ENCODE measurements at regions of chr17 and their contacts with region 1.

Region 1: GRCh38 chr17:80876950-80877728 is 114.5 kb upstream of the CHMP6 start:
- DNase-seq: peak in 2 of 3 donors; percentile 35 to 38
- ATAC-seq: no peak
- H3K4me3 ChIP-seq: no peak overlapping the region
- H3K27ac ChIP-seq: no peak overlapping the region
- H3K4me1 ChIP-seq: peaks cover 13% of the 10 kb centered on the region
- H3K27me3 ChIP-seq: no peaks in the 10 kb centered on the region

Region 2: GRCh38 chr17:80845863-80846671 is 31.1 kb before region 1 on chr17:
- intact Hi-C with region 1: no loop called
- DNase-seq: peak in 1 of 3 donors; percentile 47
- ATAC-seq: no peak
- H3K4me3 ChIP-seq: no peak overlapping the region
- H3K27ac ChIP-seq: no peak overlapping the region
- H3K4me1 ChIP-seq: no peaks in the 10 kb centered on the region
- H3K27me3 ChIP-seq: no peaks in the 10 kb centered on the region

Region 3: GRCh38 chr17:80959330-80960036 is 82.3 kb after region 1 on chr17:
- intact Hi-C with region 1: loop called in 3 of 4 experiments (anchors 5 to 10 kb)
- DNase-seq: peak; percentile 91 to 96 (median 96)
- ATAC-seq: peak; percentile 94 to 95
- H3K4me3 ChIP-seq: no peak overlapping the region
- H3K27ac ChIP-seq: peak overlapping the region; percentile 72
- H3K4me1 ChIP-seq: peaks cover 11% of the 10 kb centered on the region
- H3K27me3 ChIP-seq: no peaks in the 10 kb centered on the region